WTC11 (cell line): ENCODE measurements at regions of chr20 and their contacts with region 1.

Region 1: GRCh38 chr20:53208110-53208832 is 236.1 kb downstream of the TSHZ2 start:
- DNase-seq: peak; percentile 81
- ATAC-seq: peak; percentile 88
- H3K4me3 Mint-ChIP-seq: no peak overlapping the region
- H3K27ac Mint-ChIP-seq: no peak overlapping the region
- H3K4me1 Mint-ChIP-seq: peaks cover 31% of the 10 kb centered on the region
- H3K27me3 Mint-ChIP-seq: no peaks in the 10 kb centered on the region
- CTCF ChIP-seq: peak; percentile 63; the same call in 1 of the 2 replicates

Region 2: DNA sequence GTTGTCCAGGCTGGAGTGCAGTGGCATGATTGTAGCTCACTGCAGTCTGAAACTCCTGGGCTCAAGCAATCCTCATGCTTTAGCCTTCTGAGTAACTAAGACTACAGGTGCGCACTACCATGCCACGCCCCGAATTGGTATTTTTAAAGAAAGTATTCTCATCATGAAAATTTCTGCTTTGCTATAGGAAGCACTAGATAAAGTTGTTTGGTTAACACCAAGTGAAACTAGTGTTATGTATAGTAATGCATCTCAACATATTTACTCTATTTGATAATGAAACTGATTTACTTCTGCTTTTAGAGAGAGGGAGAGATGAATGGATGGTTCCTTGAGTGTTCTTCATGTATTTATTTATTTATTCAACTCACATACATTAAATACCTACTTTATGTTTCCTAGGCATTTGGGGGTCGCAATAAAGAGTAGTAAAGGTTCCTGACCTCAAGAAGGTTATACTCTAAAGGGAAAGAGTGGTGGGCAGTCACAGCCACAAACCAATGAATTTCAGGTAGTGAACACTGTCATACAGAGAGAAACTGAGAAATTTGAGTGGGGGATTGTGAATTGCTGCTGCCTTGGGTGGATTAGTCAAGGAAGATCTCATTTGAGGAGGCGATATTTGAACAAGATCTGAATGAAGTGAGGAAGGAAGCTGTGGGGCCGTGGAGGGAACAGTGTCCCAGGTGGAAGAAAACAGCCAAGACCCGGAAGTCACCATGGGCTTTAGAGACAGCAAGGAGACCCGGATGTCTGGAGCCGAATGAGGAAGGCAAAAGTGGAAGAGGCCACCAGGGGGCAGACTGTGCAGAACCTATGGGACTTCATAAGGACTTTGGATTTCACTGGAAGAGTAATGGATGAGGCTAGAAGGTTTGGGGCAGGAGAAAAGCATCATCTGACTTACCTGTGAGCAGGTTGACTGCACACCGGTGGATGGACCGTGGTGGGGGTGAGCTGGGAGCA is 50.5 kb before region 1 on chr20:
- CTCF ChIA-PET with region 1: no interaction called
- POLR2A ChIA-PET with region 1: no interaction called
- DNase-seq: peak; percentile 83
- ATAC-seq: peak; percentile 80
- H3K4me3 Mint-ChIP-seq: no peak overlapping the region
- H3K27ac Mint-ChIP-seq: no peak overlapping the region
- H3K4me1 Mint-ChIP-seq: peaks cover 9% of the 10 kb centered on the region
- H3K27me3 Mint-ChIP-seq: no peaks in the 10 kb centered on the region
- CTCF ChIP-seq: peak; percentile 59

Region 3: GRCh38 chr20:53284256-53284655 is 76.0 kb after region 1 on chr20:
- CTCF ChIA-PET with region 1: interaction called, 10 read pairs
- POLR2A ChIA-PET with region 1: no interaction called
- DNase-seq: no peak
- ATAC-seq: no peak
- H3K4me3 Mint-ChIP-seq: no peak overlapping the region
- H3K27ac Mint-ChIP-seq: no peak overlapping the region
- H3K4me1 Mint-ChIP-seq: peaks cover 48% of the 10 kb centered on the region
- H3K27me3 Mint-ChIP-seq: peaks cover 4% of the 10 kb centered on the region
- CTCF ChIP-seq: no peak

Region 4: DNA sequence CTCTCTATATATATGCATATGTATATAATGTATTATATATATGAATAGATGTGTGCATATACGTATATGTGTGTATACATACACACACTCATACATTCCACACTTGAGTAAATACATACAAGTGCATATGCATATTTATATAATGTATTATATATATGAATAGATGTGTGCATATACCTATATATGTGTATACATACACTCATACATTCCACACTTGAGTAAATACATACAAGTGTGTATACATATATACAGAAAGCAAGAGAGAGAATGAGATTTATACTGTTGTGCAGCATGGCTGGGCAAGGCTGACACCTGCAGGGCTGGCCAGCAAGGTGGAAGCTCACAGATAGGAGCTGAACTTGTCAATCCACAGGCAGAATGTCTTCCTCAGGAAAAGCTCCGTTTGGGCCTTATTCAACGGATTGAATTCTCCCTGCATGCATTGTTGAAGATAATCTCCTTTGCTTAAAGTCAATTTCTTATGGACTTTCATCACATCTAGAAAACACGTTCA is 128.6 kb after region 1 on chr20:
- CTCF ChIA-PET with region 1: interaction called, 11 read pairs
- POLR2A ChIA-PET with region 1: no interaction called
- DNase-seq: no peak
- ATAC-seq: no peak
- H3K4me3 Mint-ChIP-seq: no peak overlapping the region
- H3K27ac Mint-ChIP-seq: no peak overlapping the region
- H3K4me1 Mint-ChIP-seq: peaks cover 3% of the 10 kb centered on the region
- H3K27me3 Mint-ChIP-seq: no peaks in the 10 kb centered on the region
- CTCF ChIP-seq: no peak